HEK293T (cell line): ENCODE measurements at regions of chrX and their contacts with region 1.

Region 1: DNA sequence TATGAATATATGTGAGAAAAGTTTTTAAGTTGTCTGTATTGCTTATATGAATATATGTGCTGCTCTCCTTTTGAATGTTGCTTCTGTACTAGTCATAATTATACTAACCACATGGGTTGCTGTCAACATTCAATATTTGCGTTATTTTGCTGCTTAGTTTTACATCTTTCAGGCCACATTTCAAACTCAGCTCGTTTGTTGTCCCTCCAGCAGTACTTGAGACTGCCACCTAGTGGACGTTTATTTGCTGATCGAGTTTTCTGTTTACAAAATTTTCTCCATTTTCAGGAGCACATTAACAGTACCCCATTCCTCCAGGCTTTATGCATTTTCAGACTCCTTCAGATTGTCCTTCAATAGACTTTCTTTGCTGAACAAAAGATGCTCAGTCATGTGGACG is 75.8 kb downstream of the NUDT11 start:
- DNase-seq: peak; percentile 49

Region 2: DNA sequence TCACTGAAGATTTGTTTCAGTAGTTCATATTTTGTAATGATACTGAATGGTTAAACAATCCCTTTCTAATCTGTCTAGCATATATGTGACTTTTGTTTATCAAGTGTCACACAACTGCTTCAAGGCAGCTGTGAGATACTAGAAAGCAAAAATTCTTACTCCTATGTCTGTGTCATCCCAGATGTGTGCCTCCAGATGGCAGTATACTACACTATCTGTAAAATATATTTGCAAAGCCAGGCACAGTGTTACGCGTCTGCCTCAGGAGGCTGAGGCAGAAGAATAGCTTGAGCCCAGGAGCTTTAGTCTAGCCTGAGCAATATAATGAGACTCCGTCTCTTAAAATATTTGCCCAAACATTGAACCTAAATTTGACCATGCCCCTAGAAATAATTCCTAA is 84.0 kb before region 1 on chrX:
- CTCF ChIA-PET with region 1: interaction called, 12 read pairs
- POLR2A ChIA-PET with region 1: no interaction called
- DNase-seq: peak; percentile 52